Activated B cell treated with CpG ODN at 0.5 μM for 24 hours (primary cell): ENCODE measurements at regions of chr3 and their contacts with region 1.

Region 1: DNA sequence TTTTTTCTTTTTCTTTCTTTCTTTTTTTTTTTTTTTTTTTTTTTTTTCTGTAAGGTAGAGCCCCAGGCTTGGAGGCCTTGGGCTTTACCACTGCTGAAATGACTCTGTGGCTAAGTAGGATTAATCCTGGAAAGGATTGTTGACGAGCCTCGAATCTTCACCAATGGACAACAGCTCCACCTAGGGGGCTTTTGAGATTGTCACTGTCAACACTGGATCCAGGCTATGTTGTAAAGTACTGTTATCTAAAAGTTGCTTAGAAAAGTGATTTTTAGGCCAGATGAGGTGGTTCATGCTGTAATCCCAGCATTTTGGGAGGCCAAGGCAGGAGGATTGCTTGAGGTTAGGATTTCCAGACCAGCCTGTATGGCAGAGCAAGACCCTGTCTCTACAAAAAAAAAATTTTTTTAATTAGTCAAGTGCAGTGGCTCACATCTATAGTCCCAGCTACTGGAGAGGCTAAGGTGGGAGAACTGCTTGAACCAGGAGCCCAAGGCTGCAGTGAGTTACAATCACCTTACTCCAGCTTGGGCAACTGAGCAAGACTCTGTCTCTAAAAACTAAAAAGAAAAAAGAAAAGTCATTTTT is 41.6 kb downstream of the KLHL18 start:
- DNase-seq: no peak
- ATAC-seq: peak; percentile 65
- H3K4me3 Mint-ChIP-seq: no peak overlapping the region
- H3K27ac Mint-ChIP-seq: no peak overlapping the region
- H3K4me1 Mint-ChIP-seq: no peaks in the 10 kb centered on the region
- H3K27me3 Mint-ChIP-seq: no peaks in the 10 kb centered on the region
- CTCF ChIP-seq: peak; percentile 56

Region 2: DNA sequence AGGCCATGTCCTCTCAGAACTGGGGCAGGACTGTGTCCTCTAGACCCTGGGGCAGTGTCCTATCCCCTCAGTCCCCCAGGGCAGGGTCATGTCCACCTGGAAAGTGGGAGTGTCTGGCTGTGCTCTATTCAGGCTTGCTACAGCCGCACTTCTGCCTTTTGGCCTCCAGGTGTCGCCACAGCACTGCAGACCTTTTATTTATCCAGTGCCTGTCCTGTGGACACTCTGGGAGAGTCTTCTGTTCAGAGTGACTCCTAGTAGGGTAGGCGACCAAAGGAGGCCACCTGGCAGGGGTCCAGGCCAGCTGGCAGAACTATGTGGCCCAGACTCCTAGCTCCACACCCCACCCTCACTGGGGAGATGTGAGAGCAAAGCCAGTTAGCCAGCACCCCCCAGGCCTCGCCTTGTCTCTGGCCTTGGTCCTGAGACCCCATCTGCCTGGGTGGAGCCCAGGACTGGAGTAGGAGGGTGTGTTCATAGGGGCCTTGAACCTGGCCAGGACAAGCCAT is 619.3 kb before region 1 on chr3:
- CTCF ChIA-PET with region 1: interaction called, 3 read pairs
- POLR2A ChIA-PET with region 1: no interaction called
- intact Hi-C with region 1: loop called (anchors 1 kb)
- DNase-seq: peak; percentile 54
- ATAC-seq: peak; percentile 87
- H3K4me3 Mint-ChIP-seq: no peak overlapping the region
- H3K27ac Mint-ChIP-seq: no peak overlapping the region
- H3K4me1 Mint-ChIP-seq: no peaks in the 10 kb centered on the region
- H3K27me3 Mint-ChIP-seq: peaks cover 15% of the 10 kb centered on the region
- CTCF ChIP-seq: peak; percentile 78

Region 3: DNA sequence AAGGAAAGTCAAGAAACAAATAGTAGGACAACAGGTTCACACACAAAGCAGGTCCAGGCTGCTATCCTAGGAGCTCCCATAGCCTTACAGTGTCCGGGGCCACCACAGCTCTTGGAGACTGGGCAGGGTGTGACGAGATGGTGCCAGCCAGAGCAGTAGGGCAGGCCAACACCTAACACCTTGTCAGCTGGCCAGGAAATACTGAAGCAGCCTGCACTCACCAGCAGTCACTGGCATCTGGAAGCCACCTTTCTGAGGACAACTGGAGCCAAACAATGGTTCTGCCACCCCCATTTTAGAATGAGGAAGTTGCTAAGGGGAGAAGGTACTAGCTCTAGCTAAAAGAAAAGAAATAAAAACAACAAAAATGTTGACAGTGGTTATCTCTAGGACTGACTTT is 395.0 kb before region 1 on chr3:
- CTCF ChIA-PET with region 1: no interaction called
- POLR2A ChIA-PET with region 1: no interaction called
- intact Hi-C with region 1: loop called (anchors 2 kb)
- DNase-seq: no peak
- ATAC-seq: no peak
- H3K4me3 Mint-ChIP-seq: peak overlapping the region; percentile 50
- H3K27ac Mint-ChIP-seq: peak overlapping the region; percentile 93
- H3K4me1 Mint-ChIP-seq: peaks cover 93% of the 10 kb centered on the region
- H3K27me3 Mint-ChIP-seq: no peaks in the 10 kb centered on the region
- CTCF ChIP-seq: no peak

Region 4: GRCh38 chr3:47089630-47090029 is 234.7 kb before region 1 on chr3:
- CTCF ChIA-PET with region 1: interaction called, 3 read pairs
- POLR2A ChIA-PET with region 1: no interaction called
- intact Hi-C with region 1: loop called (anchors 5 kb)
- DNase-seq: no peak
- ATAC-seq: no peak
- H3K4me3 Mint-ChIP-seq: no peak overlapping the region
- H3K27ac Mint-ChIP-seq: peak overlapping the region; percentile 19
- H3K4me1 Mint-ChIP-seq: no peaks in the 10 kb centered on the region
- H3K27me3 Mint-ChIP-seq: no peaks in the 10 kb centered on the region
- CTCF ChIP-seq: no peak

Region 5: DNA sequence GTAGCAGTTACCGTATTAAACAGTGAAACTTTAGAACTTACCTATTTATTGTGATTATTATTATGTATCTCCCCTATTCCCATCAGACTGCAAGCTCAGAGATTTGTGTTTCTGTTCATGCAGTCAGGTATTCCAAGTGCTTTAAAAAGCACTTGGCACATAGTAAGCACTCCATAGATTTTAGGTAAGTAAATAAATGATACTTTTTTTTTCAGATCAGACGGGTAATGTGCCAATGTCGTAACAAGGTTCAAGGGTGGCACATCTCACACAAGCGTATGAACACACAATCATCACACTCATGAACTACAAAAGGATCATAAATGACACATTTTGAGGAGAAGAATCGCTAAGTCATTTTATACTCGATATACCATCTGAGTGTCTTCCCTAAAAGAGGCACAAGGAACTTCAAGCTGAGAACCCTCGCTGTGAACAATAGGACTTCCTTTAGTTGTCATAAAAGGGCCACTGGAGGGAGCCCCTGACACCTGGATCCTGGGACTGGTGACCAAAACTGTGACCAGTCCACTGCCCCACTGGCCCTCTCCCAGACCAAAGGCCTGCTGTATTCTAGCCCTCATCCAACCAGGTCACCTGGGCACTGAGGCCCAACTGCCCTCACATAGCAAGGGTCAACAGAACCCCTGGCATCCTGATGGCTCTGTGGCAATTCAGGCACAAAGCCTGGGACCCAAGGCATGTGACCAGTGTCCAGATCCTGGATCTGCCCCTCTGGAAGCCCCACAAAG is 73.9 kb before region 1 on chr3:
- CTCF ChIA-PET with region 1: interaction called, 8 read pairs
- POLR2A ChIA-PET with region 1: no interaction called
- intact Hi-C with region 1: loop called (anchors 1 kb)
- DNase-seq: no peak
- ATAC-seq: no peak
- H3K4me3 Mint-ChIP-seq: no peak overlapping the region
- H3K27ac Mint-ChIP-seq: no peak overlapping the region
- H3K4me1 Mint-ChIP-seq: no peaks in the 10 kb centered on the region
- H3K27me3 Mint-ChIP-seq: no peaks in the 10 kb centered on the region
- CTCF ChIP-seq: no peak

Region 6: GRCh38 chr3:47347217-47347801 is 22.9 kb after region 1 on chr3:
- CTCF ChIA-PET with region 1: no interaction called
- POLR2A ChIA-PET with region 1: no interaction called
- intact Hi-C with region 1: no loop called
- DNase-seq: no peak
- ATAC-seq: peak; percentile 89
- H3K4me3 Mint-ChIP-seq: peak overlapping the region; percentile 70
- H3K27ac Mint-ChIP-seq: peak overlapping the region; percentile 72
- H3K4me1 Mint-ChIP-seq: peaks cover 41% of the 10 kb centered on the region
- H3K27me3 Mint-ChIP-seq: no peaks in the 10 kb centered on the region
- CTCF ChIP-seq: no peak

Region 7: GRCh38 chr3:47370887-47371697 is 46.7 kb after region 1 on chr3:
- CTCF ChIA-PET with region 1: no interaction called
- POLR2A ChIA-PET with region 1: no interaction called
- intact Hi-C with region 1: no loop called
- DNase-seq: no peak
- ATAC-seq: peak; percentile 52
- H3K4me3 Mint-ChIP-seq: no peak overlapping the region
- H3K27ac Mint-ChIP-seq: no peak overlapping the region
- H3K4me1 Mint-ChIP-seq: no peaks in the 10 kb centered on the region
- H3K27me3 Mint-ChIP-seq: no peaks in the 10 kb centered on the region
- CTCF ChIP-seq: no peak